BJ (cell line): ENCODE measurements at regions of chr14 and their contacts with region 1.

Region 1: DNA sequence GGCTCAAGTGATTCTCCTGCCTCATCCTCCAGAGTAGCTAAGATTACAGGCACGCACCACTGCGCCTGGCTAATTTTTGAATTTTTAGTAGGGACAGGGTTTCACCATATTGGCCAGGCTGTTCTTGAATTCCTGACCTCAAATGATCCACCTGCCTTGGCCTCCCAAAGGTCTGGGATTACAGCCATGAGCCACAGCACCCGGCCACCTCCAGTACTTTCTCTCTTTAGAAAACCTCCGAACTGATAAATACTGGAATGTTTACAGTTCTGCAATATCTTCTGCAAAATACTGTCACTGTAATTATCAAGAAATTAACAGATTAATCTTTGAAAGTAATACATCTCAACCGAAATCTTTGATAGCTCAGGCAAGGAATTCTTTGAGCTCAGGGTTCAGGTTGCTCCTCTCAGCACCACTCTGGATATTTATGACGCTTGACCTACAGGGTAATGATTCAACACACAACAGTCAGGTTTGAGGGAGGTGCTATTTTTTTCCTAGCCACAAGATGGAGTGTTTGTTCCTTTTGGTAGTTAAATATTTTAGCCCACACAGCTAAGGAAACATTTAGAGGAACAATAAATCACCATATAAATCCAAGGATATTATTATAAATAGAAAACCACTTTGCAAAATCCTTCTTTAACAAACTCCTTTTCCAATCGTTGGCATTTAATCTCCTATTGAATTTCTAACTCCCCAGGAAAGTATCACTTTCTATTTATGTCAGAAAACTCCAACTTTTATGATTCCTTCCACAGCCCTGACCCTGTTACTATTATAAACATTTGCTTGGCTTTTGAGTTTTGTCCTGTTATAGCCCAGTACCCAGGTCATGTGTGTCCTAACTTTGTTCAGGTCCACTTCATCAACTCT is 48.6 kb upstream of the GTF2A1 start:
- DNase-seq: peak; percentile 12
- H3K4me3 ChIP-seq: no peak overlapping the region
- H3K27me3 ChIP-seq: no peaks in the 10 kb centered on the region; the same call in 1 of the 2 replicates
- CTCF ChIP-seq: peak; percentile 71

Region 2: GRCh38 chr14:81246461-81247145 is 22.7 kb before region 1 on chr14:
- CTCF ChIA-PET with region 1: interaction called, 13 read pairs
- POLR2A ChIA-PET with region 1: no interaction called
- DNase-seq: peak; percentile 39
- H3K4me3 ChIP-seq: no peak overlapping the region
- H3K27me3 ChIP-seq: no peaks in the 10 kb centered on the region
- CTCF ChIP-seq: no peak

Region 3: GRCh38 chr14:81446279-81447007 is 177.1 kb after region 1 on chr14:
- CTCF ChIA-PET with region 1: interaction called, 331 read pairs
- POLR2A ChIA-PET with region 1: no interaction called
- DNase-seq: no peak
- H3K4me3 ChIP-seq: no peak overlapping the region
- H3K27me3 ChIP-seq: peaks cover 8% of the 10 kb centered on the region
- CTCF ChIP-seq: no peak

Region 4: DNA sequence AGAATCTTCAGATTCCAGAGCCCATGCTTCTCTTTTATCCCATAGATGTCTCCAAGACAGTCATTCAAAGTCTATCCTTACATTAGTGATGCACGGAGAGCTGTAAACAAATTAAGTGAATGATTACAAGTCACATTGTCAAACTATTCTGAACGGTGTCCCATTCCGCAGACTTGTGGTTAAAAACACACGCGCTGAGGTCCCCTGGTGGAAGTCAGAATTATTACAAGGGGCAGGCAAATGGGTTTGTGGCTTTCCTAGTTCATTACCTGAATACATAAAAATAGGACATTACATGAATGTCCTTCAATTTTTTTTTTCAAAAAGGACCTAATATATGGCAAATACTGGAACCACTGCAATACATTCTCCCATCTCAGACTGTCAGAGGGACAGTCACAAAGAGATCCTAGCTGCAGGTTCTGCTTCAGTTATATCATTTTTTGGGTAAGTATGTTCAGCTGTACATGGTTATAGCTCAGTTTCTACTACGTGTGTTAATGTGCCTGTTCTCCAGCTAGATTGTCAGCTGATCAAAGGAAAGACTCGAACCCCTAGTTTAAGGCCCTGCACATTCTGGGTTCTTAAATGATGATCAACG is 183.9 kb after region 1 on chr14:
- CTCF ChIA-PET with region 1: interaction called, 331 read pairs
- POLR2A ChIA-PET with region 1: no interaction called
- DNase-seq: no peak
- H3K4me3 ChIP-seq: no peak overlapping the region
- H3K27me3 ChIP-seq: peaks cover 8% of the 10 kb centered on the region
- CTCF ChIP-seq: peak; percentile 83

Region 5: GRCh38 chr14:81464247-81465002 is 195.1 kb after region 1 on chr14:
- CTCF ChIA-PET with region 1: interaction called, 331 read pairs
- POLR2A ChIA-PET with region 1: interaction called, 3 read pairs
- DNase-seq: peak; percentile 19
- H3K4me3 ChIP-seq: peak overlapping the region; percentile 49
- H3K27me3 ChIP-seq: no peaks in the 10 kb centered on the region
- CTCF ChIP-seq: peak; percentile 84

Region 6: GRCh38 chr14:81535396-81536164 is 266.2 kb after region 1 on chr14:
- CTCF ChIA-PET with region 1: no interaction called
- POLR2A ChIA-PET with region 1: no interaction called
- DNase-seq: no peak
- H3K4me3 ChIP-seq: no peak overlapping the region
- H3K27me3 ChIP-seq: no peaks in the 10 kb centered on the region
- CTCF ChIP-seq: no peak